ENCODE measurements at regions of chr4 and their contacts with region 1.

Region 1: GRCh38 chr4:156006192-156006591 is 52.5 kb upstream of the CTSO start:
- DNase-seq: no peak
- H3K4me3 ChIP-seq: no peak overlapping the region
- H3K27ac ChIP-seq: no peak overlapping the region
- H3K4me1 ChIP-seq: no peaks in the 10 kb centered on the region
- H3K27me3 ChIP-seq: no peaks in the 10 kb centered on the region
- CTCF ChIP-seq: no peak
- POLR2A ChIP-seq: no peak

Region 2: DNA sequence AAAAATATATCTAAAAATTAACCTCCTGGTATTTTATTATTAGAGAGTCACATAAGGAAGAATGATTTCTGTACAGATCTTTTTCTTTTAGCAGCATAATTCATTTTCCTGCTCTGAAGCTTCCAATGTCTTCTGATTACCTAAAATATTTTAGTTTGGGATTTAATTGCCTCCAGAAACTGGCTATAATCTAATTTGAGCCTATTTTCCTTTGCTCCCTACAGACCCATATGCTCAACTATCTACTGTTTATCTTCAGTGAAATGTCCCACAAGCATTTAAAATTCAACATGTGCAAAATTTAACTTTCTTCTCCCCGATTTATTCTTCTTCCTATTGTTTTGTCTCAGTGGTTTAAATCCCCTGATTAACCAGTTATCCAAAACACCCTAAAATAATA is 768.6 kb before region 1 on chr4:
- intact Hi-C with region 1: loop called (anchors 5 kb)
- DNase-seq: no peak
- H3K4me3 ChIP-seq: no peak overlapping the region
- H3K27ac ChIP-seq: no peak overlapping the region
- H3K4me1 ChIP-seq: no peaks in the 10 kb centered on the region
- H3K27me3 ChIP-seq: no peaks in the 10 kb centered on the region
- CTCF ChIP-seq: no peak
- POLR2A ChIP-seq: no peak

Measured in vagina (tissue), 2 donors.